Breast epithelium (tissue), 4 donors: ENCODE measurements at regions of chr3 and their contacts with region 1.

Region 1: GRCh38 chr3:58034738-58035523 is 26.7 kb downstream of the FLNB start:
- DNase-seq: no peak
- H3K4me3 ChIP-seq: no peak overlapping the region
- H3K27ac ChIP-seq: peak overlapping the region; percentile 54 to 68
- H3K4me1 ChIP-seq: peaks cover 0 to 6% of the 10 kb centered on the region in 2 donors
- H3K27me3 ChIP-seq: no peaks in the 10 kb centered on the region
- CTCF ChIP-seq: no peak
- POLR2A ChIP-seq: no peak

Region 2: GRCh38 chr3:58063022-58063815 is 28.3 kb after region 1 on chr3:
- intact Hi-C with region 1: no loop called
- DNase-seq: peak in 1 of 2 donors; percentile 63
- H3K4me3 ChIP-seq: no peak overlapping the region
- H3K27ac ChIP-seq: peak overlapping the region; percentile 10 to 26
- H3K4me1 ChIP-seq: peaks cover 0 to 11% of the 10 kb centered on the region in 2 donors
- H3K27me3 ChIP-seq: no peaks in the 10 kb centered on the region
- CTCF ChIP-seq: no peak
- POLR2A ChIP-seq: no peak

Region 3: GRCh38 chr3:58217209-58217811 is 182.4 kb after region 1 on chr3:
- intact Hi-C with region 1: no loop called
- DNase-seq: peak in 1 of 2 donors; percentile 68
- H3K4me3 ChIP-seq: peak overlapping the region in 1 of 3 donors; percentile 7
- H3K27ac ChIP-seq: peak overlapping the region; percentile 8 to 13
- H3K4me1 ChIP-seq: no peaks in the 10 kb centered on the region
- H3K27me3 ChIP-seq: no peaks in the 10 kb centered on the region
- CTCF ChIP-seq: peak; percentile 30 to 70 (median 66)
- POLR2A ChIP-seq: no peak

Region 4: GRCh38 chr3:58464866-58465265 is 429.9 kb after region 1 on chr3:
- intact Hi-C with region 1: loop called (anchors 5 kb)
- DNase-seq: no peak
- H3K4me3 ChIP-seq: no peak overlapping the region
- H3K27ac ChIP-seq: no peak overlapping the region
- H3K4me1 ChIP-seq: no peaks in the 10 kb centered on the region
- H3K27me3 ChIP-seq: no peaks in the 10 kb centered on the region
- CTCF ChIP-seq: no peak
- POLR2A ChIP-seq: no peak